Dorsolateral prefrontal cortex (tissue), 120 donors: ENCODE measurements at regions of chr14 and their contacts with region 1.

Region 1: GRCh38 chr14:89027097-89027740 is 202.8 kb downstream of the TTC8 start:
- DNase-seq: peak in 5 of 10 donors; percentile 29 to 76 (median 52)
- H3K4me3 ChIP-seq: peak overlapping the region; percentile 40 to 85 (median 68)
- H3K27ac ChIP-seq: peak overlapping the region in 3 of 59 donors; percentile 5 to 46 (median 38)
- H3K27me3 ChIP-seq: peaks cover 0 to 2% (median 0%) of the 10 kb centered on the region in 45 donors
- CTCF ChIP-seq: peak; percentile 35 to 96 (median 74)

Region 2: DNA sequence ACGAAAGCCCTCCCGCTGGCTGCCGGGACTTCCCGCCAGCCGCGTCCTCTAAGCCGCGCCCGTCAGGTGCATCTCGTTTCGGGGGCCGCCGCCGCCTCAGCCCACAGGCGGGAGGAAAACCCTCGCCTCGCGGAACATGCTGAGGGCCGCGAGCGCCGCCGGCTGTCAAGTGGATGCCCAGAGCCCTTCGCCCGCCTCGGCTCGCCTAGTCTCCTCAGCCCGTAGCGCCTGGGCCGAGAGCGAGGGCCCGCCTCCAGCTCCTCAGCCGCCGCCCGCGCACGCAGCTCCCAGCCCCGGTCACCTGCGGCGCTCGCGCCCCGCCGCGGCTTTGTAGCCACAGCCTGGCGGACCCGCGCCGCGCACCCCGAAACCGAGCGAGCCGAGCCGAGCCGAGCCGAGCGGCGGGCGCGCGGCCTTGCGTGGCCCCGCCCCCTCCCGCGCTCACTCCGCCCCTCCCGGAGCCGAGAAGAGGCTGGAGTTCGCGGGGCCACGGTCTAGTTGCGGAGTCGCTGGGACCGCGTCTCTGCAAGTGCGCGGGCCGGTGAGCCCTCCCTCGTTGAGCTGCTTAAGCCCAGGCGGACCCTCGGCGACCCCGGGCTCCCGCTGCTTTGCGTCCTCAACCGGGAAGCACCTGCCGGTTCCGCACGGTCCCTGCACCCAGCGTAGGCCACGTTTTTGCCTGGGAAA is 234.5 kb before region 1 on chr14 and contains the start of gene EML5:
- intact Hi-C with region 1: loop called in 1 of 2 experiments (anchors 5 kb)
- DNase-seq: peak; percentile 63 to 91 (median 82)
- H3K4me3 ChIP-seq: peak within 1 kb of the TSS; percentile 52 to 92 (median 82)
- H3K27ac ChIP-seq: peak within 1 kb of the TSS in 58 of 59 donors; percentile 37 to 94 (median 84)
- H3K27me3 ChIP-seq: no peaks in the 10 kb centered on the region
- CTCF ChIP-seq: peak in 36 of 56 donors; percentile 2 to 62 (median 32)
- total RNA-seq, gene EML5: 7.7 to 23.3 (median 14.2) TPM

Region 3: GRCh38 chr14:89053303-89053702 is 26.1 kb after region 1 on chr14:
- intact Hi-C with region 1: no loop called
- DNase-seq: no peak
- H3K4me3 ChIP-seq: no peak overlapping the region
- H3K27ac ChIP-seq: no peak overlapping the region
- H3K27me3 ChIP-seq: no peaks in the 10 kb centered on the region
- CTCF ChIP-seq: no peak